Left ventricle myocardium superior (tissue), 1 donor: ENCODE measurements at regions of chr11 and their contacts with region 1.

Region 1: DNA sequence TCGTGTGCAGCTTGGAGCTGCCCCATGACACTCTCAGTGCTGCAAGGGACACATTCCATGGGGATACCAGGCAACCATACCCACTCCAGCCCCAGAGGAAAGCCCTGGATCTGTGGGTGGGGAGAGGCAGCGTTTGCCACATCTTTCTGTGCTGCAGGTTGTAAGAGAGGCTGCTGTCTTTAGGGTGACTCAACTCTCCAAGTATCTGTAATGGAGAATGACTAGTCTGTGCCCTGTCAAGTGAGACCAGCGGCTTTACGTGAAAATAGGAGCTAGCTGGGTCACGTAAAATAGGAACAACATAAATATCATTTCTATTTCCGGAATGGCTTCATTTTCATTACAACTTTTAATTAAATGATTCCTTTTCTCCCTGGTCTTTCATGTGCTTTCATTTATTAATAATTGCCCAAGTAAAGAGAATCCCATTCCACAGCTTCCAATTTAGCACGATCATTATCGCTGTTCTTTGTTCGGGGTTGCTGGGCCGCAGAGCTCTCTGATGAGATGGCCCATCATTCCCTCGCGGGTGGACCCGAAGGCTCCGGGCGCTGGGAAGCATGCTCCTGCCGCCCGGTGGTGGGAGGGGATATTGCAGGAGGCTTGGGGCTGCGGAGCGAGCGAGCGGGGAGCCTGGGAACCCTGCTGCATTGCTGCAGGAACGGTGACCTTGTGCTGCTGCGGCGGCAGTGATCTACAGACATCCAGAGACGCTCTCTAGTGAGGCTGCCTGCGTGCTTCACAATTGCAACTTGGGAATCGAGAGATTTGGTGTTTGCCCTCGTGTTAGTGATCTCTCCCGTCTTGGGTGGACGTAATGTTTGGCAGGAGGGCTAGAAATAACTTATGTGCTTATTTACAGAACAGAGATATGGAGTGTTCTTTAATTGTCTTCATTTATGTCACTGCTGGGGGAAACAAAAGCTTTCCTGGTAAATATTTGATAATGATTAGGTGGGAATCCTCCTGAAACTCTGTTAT is 10.6 kb downstream of the SLC6A5 start:
- DNase-seq: peak; percentile 86
- ATAC-seq: peak; percentile 98

Region 2: DNA sequence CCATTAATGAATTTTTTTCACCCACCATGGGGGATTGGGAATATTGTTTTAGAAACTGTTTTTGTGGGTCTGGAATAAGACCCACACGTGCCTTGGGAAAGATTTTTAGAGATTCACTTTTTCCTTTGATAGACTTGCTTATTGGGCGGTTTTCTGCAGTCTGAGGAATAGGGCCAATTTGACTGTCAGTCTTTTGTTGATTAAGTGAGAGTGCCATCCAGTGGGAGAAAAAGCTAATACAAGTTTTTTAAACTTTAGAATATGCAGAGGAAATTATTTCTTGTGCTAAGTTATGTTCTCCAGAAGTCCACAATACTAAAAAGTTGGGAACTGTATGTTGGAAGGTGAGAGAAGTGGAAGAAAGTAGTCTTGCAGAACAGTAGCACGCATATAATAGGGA is 166.4 kb before region 1 on chr11:
- intact Hi-C with region 1: loop called (anchors 5 kb)
- DNase-seq: no peak
- ATAC-seq: no peak